Kidney (tissue), 22 donors: ENCODE measurements at regions of chr2 and their contacts with region 1.

Region 1: GRCh38 chr2:119476301-119477021 is 44.8 kb downstream of the TMEM37 start:
- DNase-seq: peak in 4 of 5 donors; percentile 68 to 88 (median 80)
- H3K4me3 ChIP-seq: peak overlapping the region in 1 of 3 donors; percentile 32
- H3K27ac ChIP-seq: no peak overlapping the region
- H3K4me1 ChIP-seq: peaks cover 0 to 3% (median 0%) of the 10 kb centered on the region in 3 donors
- H3K27me3 ChIP-seq: no peaks in the 10 kb centered on the region
- CTCF ChIP-seq: peak; percentile 95

Region 2: GRCh38 chr2:119387381-119388129 is 88.9 kb before region 1 on chr2:
- intact Hi-C with region 1: no loop called
- DNase-seq: peak; percentile 56 to 93 (median 83)
- H3K4me3 ChIP-seq: peak overlapping the region in 1 of 3 donors; percentile 20
- H3K27ac ChIP-seq: peak overlapping the region; percentile 66 to 84
- H3K4me1 ChIP-seq: peaks cover 0 to 26% (median 11%) of the 10 kb centered on the region in 3 donors
- H3K27me3 ChIP-seq: no peaks in the 10 kb centered on the region
- CTCF ChIP-seq: peak; percentile 28

Region 3: DNA sequence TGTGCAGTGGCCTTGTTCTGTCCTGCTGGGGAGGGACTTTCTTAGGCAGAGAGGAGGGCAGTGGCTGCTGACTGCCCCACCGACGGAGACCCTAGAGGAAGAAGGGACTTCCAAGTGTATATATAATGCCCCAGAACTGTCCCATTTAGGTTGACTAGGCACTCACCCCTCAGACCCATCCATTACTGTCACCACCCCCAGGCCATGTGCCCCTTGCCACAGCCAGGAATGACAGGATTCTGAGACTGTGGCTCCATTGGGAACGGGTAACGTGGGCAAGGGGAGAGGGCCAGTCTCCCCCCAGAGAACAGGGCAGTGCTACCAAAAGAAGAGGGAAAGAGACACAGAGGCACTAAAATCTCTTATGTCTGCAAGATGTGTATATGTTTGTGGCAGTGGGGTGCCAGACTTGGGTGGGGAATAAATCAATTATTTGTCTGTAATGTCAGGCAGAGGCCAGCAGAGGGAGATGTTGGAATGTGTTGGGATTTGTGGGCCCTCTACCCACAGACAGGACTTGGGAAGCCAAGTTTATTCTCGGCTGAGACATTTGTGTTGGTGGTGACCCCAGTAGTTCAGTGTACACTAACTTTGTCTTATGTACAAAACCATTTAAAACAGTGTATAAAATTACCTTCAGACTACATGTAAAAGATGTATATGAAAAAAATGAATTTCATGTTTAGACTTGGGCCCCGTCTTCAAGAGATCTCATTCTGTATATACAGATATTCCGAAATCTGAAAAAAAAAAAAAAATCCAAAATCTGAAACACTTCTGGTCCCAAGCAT is 68.8 kb before region 1 on chr2:
- intact Hi-C with region 1: loop called (anchors 5 kb)
- DNase-seq: peak in 4 of 5 donors; percentile 60 to 82 (median 69)
- H3K4me3 ChIP-seq: no peak overlapping the region
- H3K27ac ChIP-seq: no peak overlapping the region
- H3K4me1 ChIP-seq: peaks cover 0 to 12% (median 4%) of the 10 kb centered on the region in 3 donors
- H3K27me3 ChIP-seq: no peaks in the 10 kb centered on the region
- CTCF ChIP-seq: peak; percentile 92

Region 4: DNA sequence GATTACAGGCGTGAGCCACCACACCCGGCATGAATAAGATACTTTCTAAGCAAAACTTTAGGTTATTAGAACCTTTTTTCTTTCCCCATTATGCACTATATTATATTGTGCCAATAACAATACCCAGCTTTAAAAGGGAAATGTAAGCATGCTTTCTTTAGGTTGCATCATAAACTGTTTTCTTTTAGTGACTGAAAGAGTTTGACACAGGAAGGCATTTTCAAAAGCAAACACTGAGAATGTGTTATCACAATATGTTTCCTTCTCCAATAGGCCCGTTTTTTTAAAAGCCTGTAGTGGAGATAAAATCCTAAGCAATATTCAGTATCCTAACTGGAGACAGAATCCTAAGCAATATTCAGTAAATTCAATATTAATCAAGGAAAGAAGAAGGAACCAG is 519.7 kb after region 1 on chr2:
- intact Hi-C with region 1: no loop called
- DNase-seq: no peak
- H3K4me3 ChIP-seq: no peak overlapping the region
- H3K27ac ChIP-seq: no peak overlapping the region
- H3K4me1 ChIP-seq: no peaks in the 10 kb centered on the region
- H3K27me3 ChIP-seq: no peaks in the 10 kb centered on the region
- CTCF ChIP-seq: no peak

Region 5: DNA sequence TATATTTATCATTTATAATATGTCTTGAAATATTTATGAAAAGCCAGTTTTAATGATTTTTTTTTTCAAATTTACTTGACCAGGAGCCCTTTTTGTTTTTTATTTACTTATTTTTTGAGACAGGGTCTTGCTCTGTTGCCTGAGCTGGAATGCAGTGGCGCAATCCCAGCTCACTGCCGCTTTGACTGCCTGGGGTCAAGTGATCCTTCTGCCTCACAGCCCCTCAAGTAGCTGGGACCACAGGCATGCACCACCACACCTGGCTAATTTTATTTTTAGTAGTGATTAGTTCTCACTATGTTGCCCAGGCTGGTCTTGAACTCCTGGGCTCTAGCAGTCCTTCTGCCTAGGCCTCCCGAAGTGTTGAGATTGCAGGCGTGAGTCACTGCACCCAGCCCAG is 542.1 kb after region 1 on chr2:
- intact Hi-C with region 1: no loop called
- DNase-seq: peak in 2 of 5 donors; percentile 23 to 31
- H3K4me3 ChIP-seq: no peak overlapping the region
- H3K27ac ChIP-seq: no peak overlapping the region
- H3K4me1 ChIP-seq: peaks cover 0 to 7% (median 0%) of the 10 kb centered on the region in 3 donors
- H3K27me3 ChIP-seq: no peaks in the 10 kb centered on the region
- CTCF ChIP-seq: no peak